Heart right ventricle (tissue), 16 donors: ENCODE measurements at regions of chr1 and their contacts with region 1.

Region 1: DNA sequence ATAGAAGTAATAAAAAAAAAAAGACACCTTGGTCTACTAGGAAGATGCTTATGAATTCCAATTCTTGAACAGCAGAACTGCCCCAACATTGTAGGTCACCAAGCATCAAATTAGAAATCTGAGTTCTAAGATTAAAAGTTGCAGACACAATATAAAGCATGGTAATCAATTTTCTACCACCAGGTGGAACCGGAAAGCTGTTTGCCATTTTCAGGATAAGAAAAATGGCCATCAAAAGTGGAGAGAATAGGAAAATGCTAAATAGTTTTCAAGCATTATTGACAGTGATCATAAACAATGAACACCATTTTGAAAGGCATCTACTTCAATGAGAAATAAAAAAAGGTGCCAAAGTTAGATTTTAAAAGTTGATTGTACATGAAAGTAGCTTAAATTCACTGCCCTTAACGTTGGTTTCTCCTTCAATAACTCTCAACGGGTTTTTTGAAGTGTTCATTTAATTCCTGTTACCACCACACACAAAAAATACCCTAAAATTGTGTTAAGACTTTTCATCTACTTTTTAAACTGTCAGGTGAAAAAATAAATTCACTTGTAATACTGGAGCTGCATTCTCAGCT is 252.9 kb downstream of the KCNT2 start:
- DNase-seq: no peak
- ATAC-seq: no peak
- H3K4me3 ChIP-seq: no peak overlapping the region
- H3K27ac ChIP-seq: no peak overlapping the region
- H3K4me1 ChIP-seq: no peaks in the 10 kb centered on the region
- H3K27me3 ChIP-seq: no peaks in the 10 kb centered on the region
- CTCF ChIP-seq: peak in 7 of 9 donors; percentile 42 to 59 (median 48)

Region 2: GRCh38 chr1:196486346-196486745 is 131.1 kb after region 1 on chr1:
- intact Hi-C with region 1: no loop called
- DNase-seq: no peak
- ATAC-seq: no peak
- H3K4me3 ChIP-seq: no peak overlapping the region
- H3K27ac ChIP-seq: no peak overlapping the region
- H3K4me1 ChIP-seq: no peaks in the 10 kb centered on the region
- H3K27me3 ChIP-seq: no peaks in the 10 kb centered on the region
- CTCF ChIP-seq: no peak

Region 3: GRCh38 chr1:196660852-196661251 is 305.6 kb after region 1 on chr1:
- intact Hi-C with region 1: loop called in 7 of 10 experiments (anchors 2 to 10 kb)
- DNase-seq: no peak
- ATAC-seq: peak in 7 of 8 donors; percentile 51 to 82 (median 72)
- H3K4me3 ChIP-seq: peak overlapping the region in 7 of 10 donors; percentile 3 to 42 (median 28)
- H3K27ac ChIP-seq: no peak overlapping the region
- H3K4me1 ChIP-seq: peaks cover 0 to 16% (median 0%) of the 10 kb centered on the region in 9 donors
- H3K27me3 ChIP-seq: no peaks in the 10 kb centered on the region
- CTCF ChIP-seq: peak; percentile 25 to 78 (median 55)